Heart left ventricle (tissue), 16 donors: ENCODE measurements at regions of chr18 and their contacts with region 1.

Region 1: DNA sequence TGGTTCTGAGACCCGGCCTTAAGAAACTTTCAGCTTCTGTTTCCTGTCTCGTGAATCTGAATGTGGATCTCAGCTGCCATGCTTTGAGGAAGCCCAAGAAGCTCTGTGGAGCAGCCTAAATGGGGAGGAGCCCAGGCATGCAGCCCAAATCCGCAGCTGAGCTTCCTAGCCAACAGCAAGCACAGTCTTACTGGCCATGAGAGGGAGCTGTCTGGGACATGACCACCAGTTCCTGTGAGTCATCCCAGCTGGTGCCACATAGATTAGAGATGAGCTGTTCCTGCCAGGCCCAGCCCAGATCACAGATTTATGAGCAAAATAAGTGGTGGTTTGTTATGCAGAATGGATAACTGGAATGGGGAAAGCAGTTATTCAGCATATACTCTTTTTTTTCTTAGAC is 224.4 kb upstream of the APCDD1 start:
- DNase-seq: peak in 1 of 5 donors; percentile 38
- ATAC-seq: no peak
- H3K4me3 ChIP-seq: no peak overlapping the region
- H3K27ac ChIP-seq: no peak overlapping the region
- H3K4me1 ChIP-seq: peaks cover 0 to 15% (median 4%) of the 10 kb centered on the region in 12 donors
- H3K27me3 ChIP-seq: no peaks in the 10 kb centered on the region
- CTCF ChIP-seq: no peak
- POLR2A ChIP-seq: no peak

Region 2: GRCh38 chr18:10169064-10169562 is 61.0 kb before region 1 on chr18:
- intact Hi-C with region 1: loop called in 2 of 10 experiments (anchors 10 kb)
- DNase-seq: no peak
- ATAC-seq: no peak
- H3K4me3 ChIP-seq: no peak overlapping the region
- H3K27ac ChIP-seq: no peak overlapping the region
- H3K4me1 ChIP-seq: peaks cover 0 to 8% (median 2%) of the 10 kb centered on the region in 12 donors
- H3K27me3 ChIP-seq: no peaks in the 10 kb centered on the region
- CTCF ChIP-seq: no peak
- POLR2A ChIP-seq: no peak

Region 3: DNA sequence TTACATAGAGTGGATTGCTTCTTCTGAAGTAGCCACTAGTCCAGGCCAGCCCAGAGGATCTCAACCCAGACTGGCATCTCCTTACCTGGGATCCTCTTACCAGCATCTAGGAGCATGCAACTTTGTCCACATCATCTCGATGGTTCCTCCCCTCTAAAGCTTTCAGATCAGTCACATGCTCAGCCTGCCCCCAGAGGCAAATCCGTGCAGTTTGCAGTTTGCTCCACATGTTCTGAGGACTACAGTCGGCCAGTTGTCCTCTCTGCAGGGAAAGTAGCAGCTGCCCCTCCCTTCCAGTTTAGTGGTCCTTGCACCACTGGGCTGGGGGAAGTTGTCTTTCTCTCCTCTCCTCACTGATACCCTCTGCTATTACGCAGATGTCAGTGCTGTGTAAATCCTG is 35.5 kb before region 1 on chr18:
- intact Hi-C with region 1: no loop called
- DNase-seq: no peak
- ATAC-seq: peak in 1 of 4 donors; percentile 15
- H3K4me3 ChIP-seq: no peak overlapping the region
- H3K27ac ChIP-seq: no peak overlapping the region
- H3K4me1 ChIP-seq: peaks cover 0 to 28% (median 3%) of the 10 kb centered on the region in 12 donors
- H3K27me3 ChIP-seq: no peaks in the 10 kb centered on the region
- CTCF ChIP-seq: no peak
- POLR2A ChIP-seq: no peak

Region 4: GRCh38 chr18:10530852-10531251 is 300.8 kb after region 1 on chr18:
- intact Hi-C with region 1: no loop called
- DNase-seq: no peak
- ATAC-seq: peak in 2 of 4 donors; percentile 33 to 49
- H3K4me3 ChIP-seq: no peak overlapping the region
- H3K27ac ChIP-seq: peak overlapping the region in 10 of 12 donors; percentile 2 to 51 (median 38)
- H3K4me1 ChIP-seq: peaks cover 0 to 56% (median 28%) of the 10 kb centered on the region in 12 donors
- H3K27me3 ChIP-seq: no peaks in the 10 kb centered on the region
- CTCF ChIP-seq: no peak
- POLR2A ChIP-seq: no peak